A673 (cell line): ENCODE measurements at regions of chr1 and their contacts with region 1.

Region 1: GRCh38 chr1:241408170-241408569 is 51.2 kb upstream of the RGS7 start:
- DNase-seq: no peak
- H3K4me3 ChIP-seq: no peak overlapping the region
- H3K27ac ChIP-seq: no peak overlapping the region
- H3K4me1 ChIP-seq: no peaks in the 10 kb centered on the region
- H3K27me3 ChIP-seq: no peaks in the 10 kb centered on the region
- CTCF ChIP-seq: 0 out of 2 replicates have a peak, but pooled peaks have one; percentile 30

Region 2: DNA sequence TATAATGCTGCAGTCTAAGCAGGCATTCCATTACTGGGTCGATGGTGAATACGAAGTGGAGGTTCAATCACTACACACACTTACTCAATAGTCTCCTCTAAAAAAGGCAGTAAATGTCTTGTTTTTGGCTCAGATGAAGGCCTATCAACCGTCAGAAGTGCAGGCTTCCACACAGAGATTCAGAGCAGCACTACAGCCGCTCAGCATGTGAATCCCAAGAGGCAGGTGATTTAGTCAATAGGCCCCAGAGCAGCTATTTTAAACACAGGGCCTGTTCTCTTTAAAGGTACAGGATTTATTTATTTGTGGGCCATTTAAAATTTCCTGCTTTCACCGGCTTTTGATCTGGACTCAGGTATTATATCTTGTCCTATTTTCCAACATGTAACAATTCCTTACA is 344.9 kb before region 1 on chr1:
- CTCF ChIA-PET with region 1: no interaction called
- POLR2A ChIA-PET with region 1: no interaction called
- intact Hi-C with region 1: no loop called
- DNase-seq: no peak
- H3K4me3 ChIP-seq: no peak overlapping the region
- H3K27ac ChIP-seq: no peak overlapping the region
- H3K4me1 ChIP-seq: no peaks in the 10 kb centered on the region
- H3K27me3 ChIP-seq: no peaks in the 10 kb centered on the region
- CTCF ChIP-seq: no peak

Region 3: DNA sequence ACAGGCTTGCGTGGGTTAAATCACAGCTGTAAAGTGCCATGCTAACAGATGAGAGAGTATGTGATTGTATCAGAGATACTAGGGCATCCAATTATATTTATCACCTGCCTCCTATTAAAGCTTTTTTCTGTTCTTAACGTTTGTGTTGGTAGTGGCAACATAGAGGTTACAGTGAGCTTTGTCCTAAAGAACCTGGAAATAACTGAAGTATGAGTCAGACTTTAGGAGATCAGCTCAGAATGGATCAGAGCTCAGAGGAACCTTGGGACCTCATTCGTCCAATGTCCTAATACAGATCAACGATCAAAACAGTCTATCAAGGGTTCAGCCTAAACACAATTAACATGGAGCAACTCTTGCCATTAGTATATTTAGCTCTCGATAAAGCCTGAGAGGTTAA is 132.2 kb before region 1 on chr1:
- CTCF ChIA-PET with region 1: no interaction called
- POLR2A ChIA-PET with region 1: no interaction called
- intact Hi-C with region 1: no loop called
- DNase-seq: no peak
- H3K4me3 ChIP-seq: no peak overlapping the region
- H3K27ac ChIP-seq: no peak overlapping the region
- H3K4me1 ChIP-seq: no peaks in the 10 kb centered on the region
- H3K27me3 ChIP-seq: no peaks in the 10 kb centered on the region
- CTCF ChIP-seq: no peak

Region 4: DNA sequence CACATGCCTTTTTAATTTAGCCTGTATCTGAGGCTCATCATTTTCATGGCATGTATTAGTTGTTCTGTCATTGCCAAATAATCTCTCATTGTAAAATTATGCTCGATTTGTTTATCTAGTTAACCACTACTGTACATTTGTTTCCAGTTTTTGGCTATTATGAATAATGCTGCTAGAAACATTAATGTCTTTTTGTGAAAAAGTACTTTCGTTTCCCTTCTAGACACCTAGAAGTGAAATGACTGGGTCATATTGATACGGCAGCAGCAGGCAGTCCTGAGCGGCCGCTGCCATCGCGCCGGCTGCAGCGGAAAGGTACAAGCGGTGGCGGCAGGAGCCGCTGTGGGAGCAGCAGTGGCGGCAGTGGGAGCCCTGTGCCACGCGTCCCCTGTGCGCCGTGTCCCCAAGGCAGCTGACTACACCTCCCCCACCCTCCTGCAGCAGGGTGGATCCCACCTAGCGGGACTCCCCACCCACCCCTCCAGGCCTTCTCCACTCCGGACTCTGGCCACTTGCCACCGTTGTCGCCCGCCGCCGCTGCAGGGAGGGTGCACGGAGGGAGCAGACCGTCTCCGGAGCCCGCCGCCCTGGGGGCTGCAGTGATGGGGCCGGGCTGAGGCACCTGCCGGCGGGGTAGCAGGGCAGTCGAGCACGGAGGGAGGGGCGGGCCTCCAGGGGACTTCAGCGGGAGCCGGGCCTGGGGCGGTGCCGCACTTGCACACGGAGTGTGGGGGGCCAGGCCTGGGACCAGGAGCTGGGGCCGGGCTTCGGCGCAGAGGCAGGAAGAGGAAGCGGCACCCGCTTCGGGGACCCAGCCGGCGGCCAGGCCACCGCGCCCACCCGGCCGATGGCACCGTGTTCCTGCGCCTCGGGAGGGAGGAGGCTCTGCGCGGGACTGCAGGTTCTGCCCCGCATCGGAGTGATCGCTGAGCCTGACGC is 15.6 kb after region 1 on chr1:
- CTCF ChIA-PET with region 1: interaction called, 13 read pairs
- POLR2A ChIA-PET with region 1: no interaction called
- intact Hi-C with region 1: no loop called
- DNase-seq: peak; percentile 4
- H3K4me3 ChIP-seq: peak overlapping the region; percentile 40
- H3K27ac ChIP-seq: no peak overlapping the region
- H3K4me1 ChIP-seq: no peaks in the 10 kb centered on the region
- H3K27me3 ChIP-seq: peaks cover 36% of the 10 kb centered on the region
- CTCF ChIP-seq: no peak

Region 5: GRCh38 chr1:241499910-241500309 is 91.7 kb after region 1 on chr1:
- CTCF ChIA-PET with region 1: no interaction called
- POLR2A ChIA-PET with region 1: no interaction called
- intact Hi-C with region 1: no loop called
- DNase-seq: peak; percentile 20
- H3K4me3 ChIP-seq: no peak overlapping the region
- H3K27ac ChIP-seq: no peak overlapping the region
- H3K4me1 ChIP-seq: no peaks in the 10 kb centered on the region
- H3K27me3 ChIP-seq: no peaks in the 10 kb centered on the region
- CTCF ChIP-seq: peak; percentile 54